ENCODE measurements at regions of chrX and their contacts with region 1.

Region 1: GRCh38 chrX:110412971-110413721 is 54.5 kb downstream of the RTL9 start:
- DNase-seq: peak; percentile 64 to 85 (median 79)
- H3K4me3 ChIP-seq: no peak overlapping the region
- H3K27ac ChIP-seq: no peak overlapping the region
- H3K4me1 ChIP-seq: peaks cover 1% of the 10 kb centered on the region
- H3K27me3 ChIP-seq: no peaks in the 10 kb centered on the region
- CTCF ChIP-seq: peak; percentile 70 to 76 (median 73)
- EP300 ChIP-seq: no peak
- POLR2A ChIP-seq: no peak

Region 2: DNA sequence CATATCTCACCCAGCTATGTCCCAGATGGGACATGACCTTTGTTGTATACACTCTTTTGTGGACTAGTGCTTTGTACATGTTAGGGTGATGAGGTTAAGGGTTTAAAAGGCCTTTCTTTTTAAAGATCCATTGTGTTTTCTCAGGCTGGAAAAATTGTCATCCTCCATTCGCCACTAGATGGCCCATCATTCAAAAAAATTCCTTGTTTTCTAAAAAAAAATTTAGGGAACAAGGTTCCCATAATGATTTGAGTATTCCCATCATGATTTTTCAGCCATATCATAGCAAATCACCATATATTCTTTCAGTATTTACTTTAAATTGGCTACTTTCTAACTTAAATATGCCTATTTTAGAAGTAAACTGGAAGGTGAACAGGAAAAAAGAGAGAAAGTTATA is 502.1 kb before region 1 on chrX:
- intact Hi-C with region 1: loop called in 1 of 4 experiments (anchors 10 kb)
- DNase-seq: no peak
- H3K4me3 ChIP-seq: no peak overlapping the region
- H3K27ac ChIP-seq: no peak overlapping the region
- H3K4me1 ChIP-seq: no peaks in the 10 kb centered on the region
- H3K27me3 ChIP-seq: no peaks in the 10 kb centered on the region
- CTCF ChIP-seq: peak in 2 of 3 donors; percentile 40 to 44
- EP300 ChIP-seq: no peak
- POLR2A ChIP-seq: no peak

Region 3: DNA sequence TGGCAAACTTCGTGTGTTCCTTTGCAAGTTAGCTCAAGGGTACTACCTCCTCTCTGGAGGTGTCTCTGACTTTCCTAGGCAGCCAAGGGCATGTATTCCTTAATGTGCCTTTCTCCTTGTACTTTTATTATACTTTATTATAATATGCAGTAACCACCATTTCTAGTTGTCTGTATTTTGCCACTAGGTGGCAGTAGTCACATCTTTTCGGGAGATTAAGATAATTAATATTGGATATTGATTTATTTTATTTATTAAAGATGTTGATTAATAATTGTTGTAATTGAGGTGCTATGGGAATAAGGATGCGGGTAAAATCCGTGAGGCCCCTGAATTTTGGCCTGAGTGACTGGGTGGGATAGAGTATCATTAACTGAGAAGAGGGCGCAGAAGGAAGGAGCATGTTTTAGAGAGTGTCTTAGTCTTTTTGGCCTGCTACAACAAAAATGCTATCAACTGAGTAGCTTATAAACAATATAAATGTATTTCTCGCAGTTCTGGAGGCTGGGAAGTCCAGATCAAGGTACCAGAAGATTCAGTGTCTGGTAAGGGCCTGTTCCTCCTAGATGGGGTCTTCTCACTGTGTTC is 256.9 kb before region 1 on chrX:
- intact Hi-C with region 1: loop called in 3 of 4 experiments (anchors 2 to 5 kb)
- DNase-seq: no peak
- H3K4me3 ChIP-seq: no peak overlapping the region
- H3K27ac ChIP-seq: no peak overlapping the region
- H3K4me1 ChIP-seq: peaks cover 1% of the 10 kb centered on the region
- H3K27me3 ChIP-seq: no peaks in the 10 kb centered on the region
- CTCF ChIP-seq: peak in 1 of 3 donors; percentile 11
- EP300 ChIP-seq: no peak
- POLR2A ChIP-seq: no peak

Region 4: GRCh38 chrX:110163488-110163887 is 249.7 kb before region 1 on chrX:
- intact Hi-C with region 1: loop called in 3 of 4 experiments (anchors 2 to 5 kb)
- DNase-seq: no peak
- H3K4me3 ChIP-seq: no peak overlapping the region
- H3K27ac ChIP-seq: no peak overlapping the region
- H3K4me1 ChIP-seq: peaks cover 1% of the 10 kb centered on the region
- H3K27me3 ChIP-seq: no peaks in the 10 kb centered on the region
- CTCF ChIP-seq: no peak
- EP300 ChIP-seq: no peak
- POLR2A ChIP-seq: no peak

Measured in ovary (tissue), 10 donors.